Astrocyte of the cerebellum (primary cell): ENCODE measurements at regions of chr14 and their contacts with region 1.

Region 1: DNA sequence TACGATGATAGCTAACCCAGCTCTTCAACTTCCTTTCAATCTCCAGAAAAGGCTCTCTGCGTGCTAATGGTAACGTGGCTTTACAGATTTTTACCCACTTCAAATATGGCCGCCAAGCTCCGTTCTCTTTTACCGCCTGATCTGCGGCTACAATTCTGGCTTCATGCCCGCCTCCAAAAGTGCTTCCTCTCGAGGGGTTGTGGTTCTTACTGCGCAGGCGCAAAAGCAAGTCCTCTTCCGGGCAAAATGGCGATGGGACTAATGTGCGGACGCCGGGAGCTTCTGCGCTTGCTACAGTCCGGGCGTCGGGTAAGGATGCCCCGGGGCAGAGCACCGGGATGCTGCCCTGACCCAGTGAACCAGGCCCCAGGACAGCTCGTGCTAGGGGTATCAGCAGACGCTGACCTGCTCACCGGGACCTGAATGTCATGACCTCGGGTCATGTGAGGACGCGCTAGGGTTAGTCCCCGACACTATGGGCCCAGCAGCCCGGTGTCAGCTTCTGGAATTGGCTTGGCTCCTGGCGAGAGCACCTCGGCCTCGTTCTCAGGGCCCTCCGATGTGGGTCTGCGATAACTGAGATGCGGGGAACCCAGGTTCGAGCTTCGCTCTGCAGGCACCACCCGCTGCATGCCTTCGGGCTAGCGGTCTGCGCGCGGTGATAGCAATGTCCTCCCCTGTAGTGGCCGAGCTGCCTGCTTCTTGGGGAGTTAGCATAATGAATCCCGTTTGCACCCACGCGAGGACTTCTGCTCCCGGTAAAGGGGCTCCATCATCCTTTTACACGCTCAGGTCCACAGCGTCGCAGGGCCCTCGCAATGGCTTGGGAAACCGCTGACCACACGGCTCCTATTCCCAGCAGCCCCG is at the start of gene OXA1L:
- DNase-seq: peak; percentile 97
- H3K4me3 ChIP-seq: peak within 1 kb of the TSS; percentile 90
- CTCF ChIP-seq: no peak

Region 2: DNA sequence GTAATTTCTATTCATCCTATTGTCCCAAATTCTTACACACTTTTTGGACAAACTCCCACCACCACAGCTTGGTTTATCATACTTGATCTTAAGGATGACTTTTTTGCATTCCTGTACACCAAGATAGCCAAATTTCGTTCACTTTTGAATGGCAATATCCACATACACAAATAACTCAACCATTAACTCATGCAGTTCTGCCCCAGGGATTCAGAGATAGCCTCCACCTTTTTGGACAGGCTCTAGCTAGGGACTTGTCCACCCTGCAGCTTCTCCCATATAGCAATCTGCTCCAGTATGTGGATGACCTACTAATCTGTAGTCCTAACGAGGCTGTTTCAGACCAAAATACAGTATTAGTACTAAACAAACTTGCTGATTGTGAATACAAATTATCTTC is 32.9 kb before region 1 on chr14:
- in situ Hi-C with region 1: loop called (anchors 5 kb)
- DNase-seq: no peak
- H3K4me3 ChIP-seq: no peak overlapping the region
- CTCF ChIP-seq: no peak

Region 3: GRCh38 chr14:22802860-22803686 is 36.4 kb after region 1 on chr14:
- in situ Hi-C with region 1: loop called (anchors 5 kb)
- DNase-seq: no peak
- H3K4me3 ChIP-seq: no peak overlapping the region
- CTCF ChIP-seq: no peak

Region 4: GRCh38 chr14:22814941-22815713 is 48.4 kb after region 1 on chr14 and contains the start of gene SLC7A7:
- in situ Hi-C with region 1: no loop called
- DNase-seq: no peak
- H3K4me3 ChIP-seq: no peak within 1 kb of the TSS
- CTCF ChIP-seq: no peak